BJ (cell line): ENCODE measurements at regions of chr12 and their contacts with region 1.

Region 1: GRCh38 chr12:57846577-57847319 is at the start of gene CTDSP2:
- DNase-seq: peak; percentile 71
- H3K4me3 ChIP-seq: peak within 1 kb of the TSS; percentile 100
- H3K27me3 ChIP-seq: no peaks in the 10 kb centered on the region
- CTCF ChIP-seq: 0 out of 2 replicates have a peak, but pooled peaks have one; percentile 5
- polyA plus RNA-seq, gene CTDSP2: 229 and 284 TPM in 2 replicates

Region 2: DNA sequence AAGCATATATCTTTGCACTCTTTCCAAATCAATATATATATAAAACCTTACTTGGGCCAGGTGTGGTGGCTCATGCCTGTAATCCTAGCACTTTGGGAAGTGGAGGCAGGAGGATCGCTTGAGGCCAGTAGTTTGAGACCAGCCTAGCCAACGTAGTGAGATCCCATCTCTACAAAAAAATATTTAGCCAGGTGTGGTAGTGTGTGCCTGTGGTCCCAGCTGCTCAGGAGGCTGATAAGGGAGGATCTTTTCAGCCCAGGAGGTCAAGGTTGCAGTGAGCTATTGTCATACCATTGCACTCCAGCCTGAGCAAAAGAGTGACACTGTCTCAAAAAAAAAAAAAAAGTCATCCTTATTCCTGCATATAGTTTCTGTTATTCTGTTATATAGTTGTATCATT is 138.5 kb before region 1 on chr12:
- CTCF ChIA-PET with region 1: no interaction called
- POLR2A ChIA-PET with region 1: no interaction called
- DNase-seq: no peak
- H3K4me3 ChIP-seq: no peak overlapping the region
- H3K27me3 ChIP-seq: no peaks in the 10 kb centered on the region
- CTCF ChIP-seq: no peak

Region 3: DNA sequence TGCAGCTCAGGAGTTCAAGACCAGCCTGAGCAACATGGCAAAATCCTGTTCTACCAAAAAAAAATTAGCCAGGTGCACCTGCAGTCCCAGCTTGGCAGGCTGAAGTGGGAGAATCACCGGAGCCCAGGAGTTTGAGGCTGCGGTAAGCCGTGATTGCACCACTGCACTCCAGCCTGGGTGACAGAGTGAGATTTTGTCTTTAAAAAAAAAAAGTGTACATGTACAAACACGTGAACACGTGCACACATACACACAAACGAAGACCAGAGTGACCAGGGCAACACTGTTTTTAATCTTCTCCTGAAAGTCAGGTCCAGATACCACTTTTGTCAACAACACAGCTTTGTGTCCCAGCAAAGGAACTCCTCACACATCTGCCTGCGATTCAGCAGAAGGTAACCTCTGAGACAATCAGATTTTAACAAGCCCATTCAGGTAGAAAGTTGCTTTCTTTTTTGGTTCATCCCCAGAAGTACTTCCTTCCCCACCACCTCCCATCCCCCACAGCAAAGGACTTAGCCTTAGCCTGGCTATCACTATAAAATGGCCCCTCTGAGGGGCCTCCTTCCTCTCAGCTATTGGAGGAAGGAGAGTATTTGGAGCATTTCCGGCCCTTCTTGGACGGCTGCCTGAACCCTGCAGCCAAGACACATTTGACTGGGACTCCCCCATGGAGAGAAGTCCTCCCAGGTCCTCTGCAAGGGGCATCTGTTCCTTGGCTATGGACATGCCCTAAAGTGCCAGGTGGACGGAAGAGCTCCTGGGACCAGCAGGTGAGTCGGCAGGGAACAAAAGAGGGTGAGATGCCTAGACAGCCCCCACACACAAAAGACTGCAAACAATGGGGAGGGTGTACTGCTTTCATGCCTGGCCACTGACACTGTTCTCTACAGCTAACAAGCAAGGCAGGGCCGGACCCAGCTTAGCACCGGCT is 10.0 kb before region 1 on chr12:
- CTCF ChIA-PET with region 1: interaction called, 14 read pairs
- POLR2A ChIA-PET with region 1: interaction called, 3 read pairs
- DNase-seq: no peak
- H3K4me3 ChIP-seq: peak overlapping the region; percentile 12
- H3K27me3 ChIP-seq: no peaks in the 10 kb centered on the region
- CTCF ChIP-seq: no peak

Region 4: GRCh38 chr12:57865090-57865751 is 18.5 kb after region 1 on chr12:
- CTCF ChIA-PET with region 1: interaction called, 9 read pairs
- POLR2A ChIA-PET with region 1: interaction called, 14 read pairs
- DNase-seq: peak; percentile 38
- H3K4me3 ChIP-seq: peak overlapping the region; percentile 46
- H3K27me3 ChIP-seq: no peaks in the 10 kb centered on the region
- CTCF ChIP-seq: no peak

Region 5: DNA sequence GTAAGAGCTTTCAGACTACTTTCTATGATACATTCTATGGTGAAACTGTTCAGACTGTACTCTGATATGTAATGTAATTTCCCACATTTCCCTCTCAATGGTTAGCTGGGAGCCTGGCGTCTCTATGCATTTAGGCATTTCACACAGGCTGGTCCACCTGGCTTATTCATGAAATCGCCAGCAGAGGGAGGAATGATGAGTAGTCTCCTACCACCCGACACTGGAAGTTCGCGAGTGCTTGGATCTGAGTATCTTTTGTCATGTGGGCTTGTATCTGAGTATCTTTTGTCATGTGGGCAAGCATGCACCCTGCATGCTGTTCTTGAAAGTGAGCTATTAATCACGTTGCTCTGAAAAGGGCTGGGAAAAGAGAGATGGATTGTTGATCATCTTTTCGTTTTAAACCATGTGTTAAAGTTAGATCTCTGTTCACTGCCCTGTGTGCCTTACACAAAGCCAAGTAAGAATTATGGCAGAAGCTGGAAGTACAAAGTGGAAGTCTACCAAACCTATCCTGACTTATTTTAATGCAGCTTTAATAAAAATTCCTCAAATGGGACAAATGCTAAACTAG is 329.6 kb after region 1 on chr12:
- CTCF ChIA-PET with region 1: no interaction called
- POLR2A ChIA-PET with region 1: no interaction called
- DNase-seq: no peak
- H3K4me3 ChIP-seq: no peak overlapping the region
- H3K27me3 ChIP-seq: peaks cover 6% of the 10 kb centered on the region
- CTCF ChIP-seq: peak; percentile 50